Posterior vena cava (tissue), 2 donors: ENCODE measurements at regions of chr15 and their contacts with region 1.

Region 1: DNA sequence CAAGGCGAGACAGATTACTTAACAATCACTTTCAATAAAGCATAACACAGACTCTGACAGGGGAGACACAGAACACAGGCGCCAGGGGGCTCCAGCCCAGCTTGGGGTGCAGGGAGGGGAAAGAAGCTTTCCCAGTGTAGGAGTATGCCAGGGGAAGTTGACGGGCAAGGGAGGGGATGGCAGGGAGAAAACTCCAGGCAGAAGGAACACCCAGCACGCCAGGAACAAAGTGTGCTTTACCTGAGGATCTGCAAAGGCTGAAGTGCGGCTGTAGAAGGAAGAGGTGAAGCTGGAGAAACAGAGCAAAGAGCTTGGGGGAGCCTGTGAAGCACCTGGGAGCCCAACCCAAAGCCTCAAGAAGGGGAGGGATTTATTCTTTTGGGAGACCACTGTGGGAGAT is 12.1 kb downstream of the RGMA start:
- DNase-seq: no peak

Region 2: GRCh38 chr15:93102211-93102610 is 25.3 kb after region 1 on chr15:
- intact Hi-C with region 1: no loop called
- DNase-seq: no peak

Region 3: GRCh38 chr15:93141371-93141794 is 64.5 kb after region 1 on chr15:
- intact Hi-C with region 1: no loop called
- DNase-seq: peak; percentile 37

Region 4: DNA sequence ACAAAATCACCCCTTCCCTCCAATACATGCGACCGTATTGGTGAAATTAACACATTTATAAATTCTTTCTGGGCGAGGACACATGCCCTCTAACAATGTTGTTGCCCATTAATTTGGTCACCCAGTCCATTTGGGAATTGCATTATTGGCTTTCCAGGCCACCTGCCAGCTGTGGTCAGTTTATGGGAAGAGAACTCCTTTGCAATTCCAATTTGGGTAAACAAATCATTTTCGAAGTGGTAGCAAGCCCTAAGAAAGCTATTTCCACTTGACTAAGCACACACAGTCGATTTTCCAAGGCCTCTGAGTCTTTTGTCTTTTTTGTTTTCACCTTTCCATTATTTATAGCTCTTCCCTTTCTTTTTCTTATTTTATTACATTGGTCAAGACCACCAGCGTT is 374.4 kb after region 1 on chr15:
- intact Hi-C with region 1: loop called in 1 of 2 experiments (anchors 5 kb)
- DNase-seq: no peak